ENCODE measurements at regions of chr19 and their contacts with region 1.

Region 1: GRCh38 chr19:13033819-13034611 is 38.7 kb downstream of the NFIX start:
- DNase-seq: no peak
- H3K4me3 ChIP-seq: no peak overlapping the region
- H3K27ac ChIP-seq: no peak overlapping the region
- H3K4me1 ChIP-seq: peaks cover 15% of the 10 kb centered on the region
- H3K27me3 ChIP-seq: no peaks in the 10 kb centered on the region
- CTCF ChIP-seq: peak; percentile 77 to 86
- POLR2A ChIP-seq: no peak

Region 2: GRCh38 chr19:12825254-12826131 is 208.5 kb before region 1 on chr19:
- CTCF ChIA-PET with region 1: no interaction called
- POLR2A ChIA-PET with region 1: no interaction called
- dilution Hi-C with region 1: no loop called
- intact Hi-C with region 1: no loop called
- DNase-seq: peak; percentile 43
- H3K4me3 ChIP-seq: no peak overlapping the region
- H3K27ac ChIP-seq: no peak overlapping the region
- H3K4me1 ChIP-seq: no peaks in the 10 kb centered on the region
- H3K27me3 ChIP-seq: no peaks in the 10 kb centered on the region
- CTCF ChIP-seq: peak; percentile 39 to 66
- POLR2A ChIP-seq: no peak

Region 3: GRCh38 chr19:12965017-12965811 is 68.8 kb before region 1 on chr19:
- CTCF ChIA-PET with region 1: interaction called, 11 read pairs
- POLR2A ChIA-PET with region 1: no interaction called
- dilution Hi-C with region 1: no loop called
- intact Hi-C with region 1: no loop called
- DNase-seq: peak; percentile 74
- H3K4me3 ChIP-seq: peak overlapping the region; percentile 1 to 48 (median 45)
- H3K27ac ChIP-seq: peak overlapping the region; percentile 4
- H3K4me1 ChIP-seq: peaks cover 2% of the 10 kb centered on the region
- H3K27me3 ChIP-seq: no peaks in the 10 kb centered on the region
- CTCF ChIP-seq: peak; percentile 77 to 99
- POLR2A ChIP-seq: no peak

Region 4: DNA sequence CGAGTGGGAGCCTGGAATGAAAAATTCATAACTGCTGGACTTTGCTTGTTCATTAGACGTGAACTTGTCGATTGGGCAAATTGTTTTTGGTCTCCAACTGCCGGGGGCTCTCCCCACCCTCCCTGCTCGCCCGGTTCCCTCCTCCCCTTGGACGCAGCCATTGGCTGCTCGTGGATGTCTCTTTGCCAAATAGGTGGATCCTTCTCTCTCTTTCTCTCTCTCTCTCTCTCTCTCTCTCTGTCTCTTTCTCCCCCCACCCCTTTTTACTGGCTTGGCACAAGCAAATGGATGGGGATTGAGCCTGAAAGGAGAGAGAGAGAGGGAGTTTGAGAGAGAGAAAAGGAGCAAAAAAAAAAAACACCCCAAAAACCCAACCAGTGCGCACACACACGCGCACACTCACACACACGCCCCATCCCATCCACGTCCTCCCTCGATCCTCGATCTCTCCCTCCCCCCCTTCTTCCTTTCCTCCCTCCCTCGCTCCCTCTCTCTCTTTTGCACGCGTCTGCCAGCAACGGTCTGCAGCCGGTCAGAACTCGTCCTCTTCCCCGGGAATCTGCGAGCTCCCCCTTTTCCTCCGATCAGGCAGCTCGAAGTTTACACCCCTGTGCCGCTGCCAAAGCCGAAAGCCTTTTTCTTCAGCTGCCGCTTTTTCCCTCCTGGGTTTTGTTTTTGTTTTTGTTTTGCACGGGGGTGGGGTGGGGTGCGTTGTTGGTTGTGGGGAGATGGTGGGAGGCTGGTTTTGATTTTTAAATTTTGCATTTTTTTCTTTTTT is 11.0 kb before region 1 on chr19:
- CTCF ChIA-PET with region 1: interaction called, 13 read pairs
- POLR2A ChIA-PET with region 1: no interaction called
- dilution Hi-C with region 1: no loop called
- intact Hi-C with region 1: no loop called
- DNase-seq: peak; percentile 80
- H3K4me3 ChIP-seq: peak overlapping the region; percentile 28 to 84 (median 59)
- H3K27ac ChIP-seq: peak overlapping the region; percentile 33
- H3K4me1 ChIP-seq: peaks cover 52% of the 10 kb centered on the region
- H3K27me3 ChIP-seq: no peaks in the 10 kb centered on the region
- CTCF ChIP-seq: no peak
- POLR2A ChIP-seq: peak; percentile 31

Region 5: DNA sequence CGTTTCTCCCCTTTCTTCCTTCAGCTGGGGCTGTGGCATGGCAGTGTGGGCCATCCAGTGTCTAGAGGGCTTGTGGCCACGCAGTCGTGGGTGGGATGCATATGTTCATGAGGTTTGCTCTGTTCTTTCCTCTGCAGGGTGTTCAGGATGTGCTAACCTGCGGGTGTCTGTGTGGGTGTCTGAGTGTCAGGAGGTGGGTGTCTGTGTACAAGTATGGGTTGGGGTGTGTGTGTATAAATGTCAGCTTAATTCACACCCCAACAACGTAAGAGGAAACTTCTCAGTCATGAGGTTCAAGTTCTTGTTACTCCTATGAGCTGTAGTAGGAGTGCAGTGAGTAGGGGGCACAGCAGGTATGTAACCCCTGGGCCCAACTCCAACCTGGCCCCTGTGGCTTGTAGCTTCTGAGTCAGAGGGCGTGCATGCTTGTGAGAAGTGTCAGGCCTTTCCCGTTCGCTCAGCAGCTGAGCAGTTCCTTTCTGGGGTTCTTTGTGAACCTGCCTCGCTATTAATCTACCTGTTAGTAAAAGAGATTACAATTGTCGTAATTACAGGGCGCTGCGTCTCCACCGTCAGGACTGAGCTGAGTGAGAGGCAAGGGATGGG is 10.3 kb after region 1 on chr19:
- CTCF ChIA-PET with region 1: interaction called, 43 read pairs
- POLR2A ChIA-PET with region 1: no interaction called
- dilution Hi-C with region 1: no loop called
- intact Hi-C with region 1: no loop called
- DNase-seq: no peak
- H3K4me3 ChIP-seq: no peak overlapping the region
- H3K27ac ChIP-seq: no peak overlapping the region
- H3K4me1 ChIP-seq: no peaks in the 10 kb centered on the region
- H3K27me3 ChIP-seq: no peaks in the 10 kb centered on the region
- CTCF ChIP-seq: no peak
- POLR2A ChIP-seq: no peak

Region 6: GRCh38 chr19:13069415-13070359 is 35.7 kb after region 1 on chr19:
- CTCF ChIA-PET with region 1: interaction called, 463 read pairs
- POLR2A ChIA-PET with region 1: no interaction called
- dilution Hi-C with region 1: no loop called
- intact Hi-C with region 1: no loop called
- DNase-seq: peak; percentile 41
- H3K4me3 ChIP-seq: no peak overlapping the region
- H3K27ac ChIP-seq: no peak overlapping the region
- H3K4me1 ChIP-seq: no peaks in the 10 kb centered on the region
- H3K27me3 ChIP-seq: no peaks in the 10 kb centered on the region
- CTCF ChIP-seq: peak in 1 of 2 donors; percentile 12
- POLR2A ChIP-seq: no peak

Region 7: GRCh38 chr19:13082192-13083007 is 48.4 kb after region 1 on chr19:
- CTCF ChIA-PET with region 1: interaction called, 22 read pairs
- POLR2A ChIA-PET with region 1: no interaction called
- dilution Hi-C with region 1: no loop called
- intact Hi-C with region 1: no loop called
- DNase-seq: peak; percentile 57
- H3K4me3 ChIP-seq: no peak overlapping the region
- H3K27ac ChIP-seq: no peak overlapping the region
- H3K4me1 ChIP-seq: peaks cover 4% of the 10 kb centered on the region
- H3K27me3 ChIP-seq: no peaks in the 10 kb centered on the region
- CTCF ChIP-seq: peak; percentile 39 to 60
- POLR2A ChIP-seq: no peak

Region 8: GRCh38 chr19:13115936-13116281 is 81.9 kb after region 1 on chr19:
- CTCF ChIA-PET with region 1: no interaction called
- POLR2A ChIA-PET with region 1: no interaction called
- dilution Hi-C with region 1: no loop called
- intact Hi-C with region 1: no loop called
- DNase-seq: no peak
- H3K4me3 ChIP-seq: peak overlapping the region; percentile 64 to 82 (median 78)
- H3K27ac ChIP-seq: peak overlapping the region; percentile 60
- H3K4me1 ChIP-seq: peaks cover 13% of the 10 kb centered on the region
- H3K27me3 ChIP-seq: no peaks in the 10 kb centered on the region
- CTCF ChIP-seq: no peak
- POLR2A ChIP-seq: no peak